ENCODE measurements at regions of chr7 and their contacts with region 1.

Region 1: GRCh38 chr7:5315761-5316160 is 33.0 kb downstream of the SLC29A4 start:
- DNase-seq: no peak
- ATAC-seq: no peak
- H3K4me3 ChIP-seq: no peak overlapping the region
- H3K27ac ChIP-seq: no peak overlapping the region
- H3K4me1 ChIP-seq: no peaks in the 10 kb centered on the region
- CTCF ChIP-seq: no peak
- EP300 ChIP-seq: no peak
- POLR2A ChIP-seq: no peak
- RAD21 ChIP-seq: no peak

Region 2: GRCh38 chr7:5357976-5358569 is 42.3 kb after region 1 on chr7:
- CTCF ChIA-PET with region 1: no interaction called
- POLR2A ChIA-PET with region 1: no interaction called
- DNase-seq: no peak
- ATAC-seq: no peak
- H3K4me3 ChIP-seq: no peak overlapping the region
- H3K27ac ChIP-seq: no peak overlapping the region
- H3K4me1 ChIP-seq: no peaks in the 10 kb centered on the region
- CTCF ChIP-seq: no peak
- EP300 ChIP-seq: no peak
- POLR2A ChIP-seq: no peak
- RAD21 ChIP-seq: no peak

Region 3: GRCh38 chr7:5549096-5549763 is 233.5 kb after region 1 on chr7:
- CTCF ChIA-PET with region 1: no interaction called
- POLR2A ChIA-PET with region 1: interaction called, 11 read pairs
- DNase-seq: peak; percentile 89 to 91
- ATAC-seq: peak; percentile 87 to 93
- H3K4me3 ChIP-seq: no peak overlapping the region; the same call in 2 of the 3 replicates
- H3K27ac ChIP-seq: peak overlapping the region; percentile 81 to 86
- H3K4me1 ChIP-seq: peaks cover 25% of the 10 kb centered on the region
- CTCF ChIP-seq: no peak
- EP300 ChIP-seq: no peak
- POLR2A ChIP-seq: no peak
- RAD21 ChIP-seq: no peak